ENCODE measurements at regions of chr3 and their contacts with region 1.

Region 1: GRCh38 chr3:46947981-46948791 is 28.4 kb downstream of the CCDC12 start:
- DNase-seq: peak; percentile 65
- H3K4me3 Mint-ChIP-seq: peak overlapping the region; percentile 74
- H3K27ac Mint-ChIP-seq: peak overlapping the region; percentile 97
- H3K4me1 Mint-ChIP-seq: peaks cover 83% of the 10 kb centered on the region
- H3K27me3 Mint-ChIP-seq: no peaks in the 10 kb centered on the region

Region 2: DNA sequence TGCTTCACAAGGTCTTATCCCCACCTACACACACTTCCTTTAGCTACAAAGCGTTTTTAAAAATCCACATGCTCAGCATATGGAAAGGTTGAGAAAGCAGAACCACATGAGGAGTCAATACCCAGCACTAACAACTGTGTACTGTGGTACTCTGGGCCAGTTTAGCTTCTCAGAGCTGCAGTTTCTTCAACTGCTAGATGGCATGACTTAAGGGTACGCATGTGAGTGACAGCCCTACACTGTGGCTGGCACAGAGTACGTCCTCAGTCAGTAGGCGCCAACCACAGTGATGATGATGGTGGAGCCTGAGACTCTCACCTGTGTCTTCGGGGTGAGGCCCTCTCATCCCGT is 10.9 kb after region 1 on chr3:
- intact Hi-C with region 1: loop called (anchors 1 kb)
- DNase-seq: no peak
- H3K4me3 Mint-ChIP-seq: peak overlapping the region; percentile 40
- H3K27ac Mint-ChIP-seq: peak overlapping the region; percentile 89
- H3K4me1 Mint-ChIP-seq: peaks cover 74% of the 10 kb centered on the region
- H3K27me3 Mint-ChIP-seq: no peaks in the 10 kb centered on the region

Region 3: GRCh38 chr3:46987743-46988401 is 39.7 kb after region 1 on chr3:
- intact Hi-C with region 1: loop called (anchors 2 kb)
- DNase-seq: peak; percentile 89
- H3K4me3 Mint-ChIP-seq: peak overlapping the region; percentile 77
- H3K27ac Mint-ChIP-seq: peak overlapping the region; percentile 94
- H3K4me1 Mint-ChIP-seq: peaks cover 56% of the 10 kb centered on the region
- H3K27me3 Mint-ChIP-seq: no peaks in the 10 kb centered on the region

Region 4: DNA sequence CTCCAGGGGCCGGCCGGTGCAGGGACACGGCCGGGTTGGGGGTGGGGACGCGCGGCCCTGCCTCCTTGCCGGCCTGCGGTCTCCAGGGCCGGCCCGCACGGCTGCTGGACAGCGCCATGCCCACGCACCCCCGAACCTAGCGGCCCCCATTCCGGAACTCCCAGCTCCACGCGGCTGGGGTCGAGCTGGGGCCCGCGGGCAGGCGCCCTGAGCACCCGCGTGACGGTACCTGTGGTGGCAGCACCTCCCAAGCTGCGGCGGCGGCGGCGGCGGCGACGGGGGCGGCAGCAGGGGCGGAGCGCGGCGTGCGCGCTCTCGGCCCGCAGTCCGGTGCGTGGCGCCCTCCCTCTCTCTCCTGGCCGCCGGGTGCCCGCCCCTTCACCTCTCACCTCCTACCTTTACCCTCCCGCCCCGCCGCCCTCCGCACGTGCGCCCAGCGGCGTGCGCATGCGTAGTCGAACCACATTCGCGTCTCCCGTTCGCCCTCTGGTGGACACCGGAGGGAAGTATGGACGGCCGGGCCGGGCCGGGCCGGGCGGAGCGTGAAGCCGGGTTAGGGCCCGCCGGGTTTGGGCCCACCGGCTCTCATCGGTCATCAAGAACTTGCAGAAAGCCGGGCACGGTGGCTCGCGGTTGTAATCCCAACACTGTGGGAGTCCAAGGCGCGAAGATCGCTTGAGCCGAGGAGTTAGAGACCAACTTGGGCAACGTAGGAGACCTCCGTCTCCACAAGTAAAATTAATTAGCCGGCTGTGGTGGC is 527.6 kb after region 1 on chr3 and contains the start of gene SCAP:
- intact Hi-C with region 1: no loop called
- DNase-seq: peak; percentile 92
- H3K4me3 Mint-ChIP-seq: peak within 1 kb of the TSS; percentile 99
- H3K27ac Mint-ChIP-seq: peak within 1 kb of the TSS; percentile 94
- H3K4me1 Mint-ChIP-seq: peaks cover 17% of the 10 kb centered on the region
- H3K27me3 Mint-ChIP-seq: no peaks in the 10 kb centered on the region
- total RNA-seq, gene SCAP: 79.6 and 83.9 TPM in 2 replicates

Measured in activated T-helper 2 cell treated with anti-CD3 and anti-CD28 coated beads, Interferon-gamma antibody, Interleukin-2, Interleukin-4, amounts not matched to agents 10 μg/mL and 5 μg/mL and 100 μg/mL, durations not matched to agents 14 hours and 24 hours and 36 hours (primary cell).